Psoas muscle (tissue), 8 donors: ENCODE measurements at regions of chr3 and their contacts with region 1.

Region 1: GRCh38 chr3:24185738-24186384 is 240.8 kb downstream of the NR1D2 start:
- DNase-seq: peak; percentile 23 to 56
- ATAC-seq: peak; percentile 73 to 87 (median 83)
- H3K4me3 ChIP-seq: no peak overlapping the region
- H3K27ac ChIP-seq: peak overlapping the region; percentile 56
- H3K4me1 ChIP-seq: peaks cover 30% of the 10 kb centered on the region
- H3K27me3 ChIP-seq: no peaks in the 10 kb centered on the region
- CTCF ChIP-seq: peak; percentile 54

Region 2: GRCh38 chr3:23819599-23820360 is 366.1 kb before region 1 on chr3:
- intact Hi-C with region 1: no loop called
- DNase-seq: no peak
- ATAC-seq: peak; percentile 33 to 69 (median 60)
- H3K4me3 ChIP-seq: no peak overlapping the region
- H3K27ac ChIP-seq: no peak overlapping the region
- H3K4me1 ChIP-seq: peaks cover 38% of the 10 kb centered on the region
- H3K27me3 ChIP-seq: no peaks in the 10 kb centered on the region
- CTCF ChIP-seq: no peak

Region 3: GRCh38 chr3:24224666-24225384 is 39.0 kb after region 1 on chr3:
- intact Hi-C with region 1: loop called in 1 of 2 experiments (anchors 1 kb)
- DNase-seq: no peak
- ATAC-seq: no peak
- H3K4me3 ChIP-seq: no peak overlapping the region
- H3K27ac ChIP-seq: no peak overlapping the region
- H3K4me1 ChIP-seq: peaks cover 11% of the 10 kb centered on the region
- H3K27me3 ChIP-seq: no peaks in the 10 kb centered on the region
- CTCF ChIP-seq: no peak